ENCODE measurements at regions of chr5 and their contacts with region 1.

Region 1: GRCh38 chr5:139942243-139942642 is 100.9 kb downstream of the NRG2 start:
- DNase-seq: no peak
- CTCF ChIP-seq: no peak

Region 2: DNA sequence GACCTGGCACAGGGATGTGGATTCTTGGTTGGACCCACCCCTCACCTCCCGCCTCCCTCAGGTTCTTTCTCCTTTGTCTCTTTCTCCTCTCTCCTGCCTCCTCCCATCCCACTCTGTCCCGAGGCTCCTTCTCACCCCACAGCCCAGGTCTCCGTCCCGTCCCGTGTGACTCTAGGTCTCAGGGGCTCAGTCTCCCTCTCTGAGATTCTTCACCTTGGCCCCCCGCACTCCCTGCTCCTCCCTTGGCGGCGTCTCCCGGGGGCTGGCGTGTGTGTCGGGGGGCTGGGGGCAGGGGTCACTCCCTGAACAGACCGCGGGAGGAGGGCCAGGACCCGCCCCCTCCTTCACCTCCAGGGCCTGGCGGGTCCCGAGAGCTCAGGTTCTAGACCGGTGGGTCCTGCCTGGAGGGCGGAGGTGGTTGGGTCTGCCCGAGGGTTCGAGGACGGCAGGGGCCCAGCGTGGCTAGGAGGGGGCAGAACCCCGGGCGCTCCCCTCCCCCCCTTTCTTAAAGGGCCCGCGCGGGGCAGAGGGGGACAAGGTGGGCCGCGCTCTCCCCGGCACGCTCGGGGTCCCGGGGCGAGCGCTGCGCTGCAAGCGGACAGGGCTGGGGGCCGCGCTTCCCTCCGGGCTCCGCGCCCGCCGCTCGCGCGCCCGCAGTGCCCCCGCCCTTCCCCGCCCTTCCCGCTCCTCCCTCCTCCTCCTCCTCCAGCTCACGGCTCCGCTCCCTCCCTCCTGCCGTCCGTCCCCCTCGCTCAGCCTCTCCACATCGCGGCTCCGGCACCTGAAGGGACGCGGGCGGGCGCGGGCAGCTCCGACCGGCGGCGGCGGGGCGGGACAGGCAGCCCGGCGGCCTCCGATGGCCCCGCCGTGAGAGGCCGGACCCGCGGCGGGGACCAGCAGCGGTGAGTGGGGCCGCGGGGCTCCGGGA is 146.9 kb before region 1 on chr5 and contains the start of gene PSD2:
- CTCF ChIA-PET with region 1: no interaction called
- POLR2A ChIA-PET with region 1: no interaction called
- DNase-seq: no peak
- CTCF ChIP-seq: no peak

Region 3: DNA sequence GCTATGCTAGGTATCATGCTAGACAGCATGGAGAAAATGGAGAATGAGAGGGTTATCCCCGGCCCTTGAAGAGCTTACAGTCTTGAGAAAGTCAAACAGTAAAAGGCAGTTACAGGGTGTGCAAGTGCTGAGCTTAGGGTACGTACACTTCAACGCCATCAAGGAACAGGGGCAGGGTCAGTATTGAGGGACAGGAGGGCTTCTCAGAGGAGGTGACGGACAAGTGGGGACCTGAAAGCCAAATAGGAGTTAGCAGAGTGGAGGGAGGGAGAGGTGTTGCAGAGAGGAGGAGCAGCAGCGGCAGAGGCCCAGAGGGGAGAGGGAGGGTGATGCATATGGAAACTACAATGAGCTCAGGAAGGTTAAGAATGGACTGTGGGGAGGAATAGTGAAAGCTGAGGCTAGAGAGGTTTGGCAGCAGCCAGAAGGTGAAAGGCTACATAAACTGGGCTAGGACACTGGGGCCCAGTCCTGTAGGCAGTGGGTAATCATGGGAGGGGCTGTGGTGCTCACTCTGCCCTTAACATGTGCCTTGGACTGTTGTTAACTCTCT is 12.9 kb after region 1 on chr5:
- CTCF ChIA-PET with region 1: interaction called, 10 read pairs
- POLR2A ChIA-PET with region 1: no interaction called
- DNase-seq: peak; percentile 61
- CTCF ChIP-seq: no peak